A673 (cell line): ENCODE measurements at regions of chr10 and their contacts with region 1.

Region 1: GRCh38 chr10:89296220-89296648 is 5.6 kb upstream of the IFIT2 start:
- DNase-seq: peak; percentile 42
- H3K4me3 ChIP-seq: no peak overlapping the region
- H3K27ac ChIP-seq: no peak overlapping the region
- H3K4me1 ChIP-seq: peaks cover 4% of the 10 kb centered on the region
- H3K27me3 ChIP-seq: no peaks in the 10 kb centered on the region
- CTCF ChIP-seq: no peak

Region 2: GRCh38 chr10:89264653-89265052 is 31.6 kb before region 1 on chr10:
- CTCF ChIA-PET with region 1: no interaction called
- POLR2A ChIA-PET with region 1: interaction called, 13 read pairs
- intact Hi-C with region 1: no loop called
- DNase-seq: no peak
- H3K4me3 ChIP-seq: no peak overlapping the region
- H3K27ac ChIP-seq: no peak overlapping the region
- H3K4me1 ChIP-seq: peaks cover 5% of the 10 kb centered on the region
- H3K27me3 ChIP-seq: no peaks in the 10 kb centered on the region
- CTCF ChIP-seq: no peak

Region 3: DNA sequence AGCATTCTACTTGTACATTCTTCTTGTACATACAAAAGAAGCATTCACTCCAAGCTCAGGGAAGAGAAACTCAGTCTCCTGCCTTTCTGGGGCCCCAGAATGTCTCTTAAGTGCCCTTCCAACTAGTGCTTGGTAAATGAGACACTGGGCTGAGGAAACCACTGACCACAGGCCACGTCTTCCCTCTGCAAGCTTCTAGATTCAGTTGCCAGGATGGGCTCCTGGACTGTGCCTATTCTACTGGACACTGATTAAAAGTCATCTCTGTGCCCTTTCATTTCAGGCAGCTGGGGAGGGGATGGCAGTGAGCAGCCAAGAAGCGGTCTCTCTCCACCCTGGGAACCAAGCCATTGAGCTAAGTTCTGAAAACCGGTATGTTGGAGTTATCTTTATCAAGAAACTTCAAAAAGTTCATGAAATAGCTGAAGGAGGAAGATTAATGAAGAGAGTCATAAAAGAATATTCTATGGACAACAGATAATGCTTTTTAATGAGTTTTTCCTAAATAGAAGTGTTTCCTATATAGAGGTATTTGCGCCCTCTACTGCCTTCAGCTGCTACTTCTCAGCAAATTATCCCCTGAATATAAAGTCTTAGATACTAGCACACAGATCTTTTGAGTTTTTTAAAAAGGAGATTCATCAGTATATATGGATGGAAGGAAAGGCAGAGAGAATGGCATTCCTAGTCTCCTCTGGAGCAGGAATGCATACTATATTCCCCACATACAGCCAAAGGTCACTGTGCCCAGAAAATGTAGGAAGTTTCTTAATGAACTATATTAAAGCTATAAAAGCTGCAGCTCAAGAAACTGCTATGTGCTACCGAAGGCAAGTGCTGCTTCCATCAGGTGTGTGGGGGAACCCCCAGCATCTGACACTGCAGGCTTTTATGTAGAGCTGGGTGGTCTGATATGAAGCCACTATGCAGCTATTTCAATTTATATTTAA is 73.2 kb after region 1 on chr10:
- CTCF ChIA-PET with region 1: no interaction called
- POLR2A ChIA-PET with region 1: no interaction called
- intact Hi-C with region 1: loop called (anchors 5 kb)
- DNase-seq: peak; percentile 62
- H3K4me3 ChIP-seq: no peak overlapping the region
- H3K27ac ChIP-seq: no peak overlapping the region
- H3K4me1 ChIP-seq: peaks cover 15% of the 10 kb centered on the region
- H3K27me3 ChIP-seq: no peaks in the 10 kb centered on the region
- CTCF ChIP-seq: peak; percentile 82

Region 4: DNA sequence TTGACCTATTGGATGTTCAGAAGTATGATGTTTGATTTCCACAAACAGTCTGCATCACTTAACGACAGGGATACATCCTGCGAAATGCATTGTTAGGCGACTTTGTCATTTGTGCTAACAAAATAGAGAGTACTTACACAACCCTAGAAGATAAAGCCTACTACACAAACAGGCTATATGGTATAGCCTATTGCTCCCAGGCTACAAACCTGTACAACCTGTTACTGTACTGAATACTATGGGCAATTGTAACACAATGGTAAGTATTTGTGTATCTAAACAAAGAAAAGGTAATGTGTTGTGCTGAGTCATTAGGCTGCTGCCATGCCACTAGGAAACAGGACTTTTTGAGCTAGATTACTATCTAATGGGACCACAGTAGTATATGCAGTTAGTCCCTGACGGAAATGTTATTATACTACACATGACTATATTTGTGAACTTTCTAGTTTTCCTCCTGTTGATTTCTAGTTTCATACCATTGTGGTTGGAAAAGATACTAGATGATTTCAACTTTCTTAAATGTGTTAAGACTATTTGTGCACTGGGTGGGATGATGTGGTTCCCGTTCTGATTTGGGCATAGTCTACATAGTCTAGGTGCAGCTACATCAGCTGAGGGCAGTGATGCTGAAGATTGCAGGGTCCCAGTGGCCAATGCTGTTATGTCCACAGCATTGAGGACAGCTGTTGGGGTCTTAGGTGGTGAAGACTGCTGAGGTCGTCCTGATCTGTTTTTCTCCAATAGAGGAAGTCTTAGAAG is 1399.9 kb after region 1 on chr10:
- CTCF ChIA-PET with region 1: no interaction called
- POLR2A ChIA-PET with region 1: no interaction called
- intact Hi-C with region 1: no loop called
- DNase-seq: no peak
- H3K4me3 ChIP-seq: no peak overlapping the region
- H3K27ac ChIP-seq: no peak overlapping the region
- H3K4me1 ChIP-seq: no peaks in the 10 kb centered on the region
- H3K27me3 ChIP-seq: peaks cover 7% of the 10 kb centered on the region
- CTCF ChIP-seq: no peak